ENCODE measurements at regions of chr4 and their contacts with region 1.

Region 1: DNA sequence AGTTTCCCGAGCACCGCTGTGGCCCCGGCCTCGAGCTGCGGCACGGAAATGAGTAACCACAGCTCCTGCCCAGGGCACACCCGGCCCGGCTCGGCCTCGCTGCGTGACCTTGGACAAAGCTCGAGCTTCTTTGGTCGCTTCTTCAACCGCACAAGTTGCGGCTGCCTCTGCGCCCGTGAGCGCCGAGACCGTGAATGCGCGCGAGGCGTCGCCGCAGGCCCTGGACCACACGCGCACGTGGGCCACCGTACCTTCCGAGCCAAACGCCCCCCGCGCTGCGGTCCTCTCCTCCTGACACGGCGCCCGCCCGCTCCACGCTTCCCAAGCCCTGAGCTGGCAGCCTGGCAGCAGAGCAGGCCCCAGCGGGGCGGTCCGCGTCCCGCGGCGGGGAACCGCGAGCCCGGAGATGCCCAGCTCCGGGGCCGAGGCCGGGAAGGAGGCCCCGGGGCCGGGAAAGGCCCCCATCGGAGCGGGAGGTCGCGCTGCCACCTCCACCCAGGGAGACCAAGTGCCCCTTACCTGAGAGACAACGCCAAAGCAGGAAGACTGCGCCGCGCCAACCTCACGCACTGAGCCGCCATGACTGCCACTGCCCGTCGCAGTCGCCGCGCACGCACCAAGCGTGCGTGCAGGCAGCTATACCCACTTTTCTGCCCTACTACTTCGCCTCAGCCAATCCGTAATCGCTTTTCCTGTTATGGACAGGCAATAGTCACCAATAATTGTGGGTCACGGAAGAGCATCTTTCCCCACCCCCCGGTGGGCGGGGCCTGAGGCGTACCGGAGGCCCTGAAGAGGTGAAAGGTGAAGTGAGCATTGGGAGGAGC is at the start of gene GRPEL1:
- DNase-seq: peak; percentile 99
- H3K4me3 ChIP-seq: peak within 1 kb of the TSS; percentile 94
- H3K27ac ChIP-seq: peak within 1 kb of the TSS; percentile 50
- H3K4me1 ChIP-seq: peaks cover 27% of the 10 kb centered on the region
- CTCF ChIP-seq: 0 out of 2 replicates have a peak, but pooled peaks have one; percentile 27
- total RNA-seq, gene GRPEL1: 27.4 and 33.4 TPM in 2 replicates

Region 2: GRCh38 chr4:6716018-6716911 is 351.4 kb before region 1 on chr4 and contains the start of gene BLOC1S4:
- CTCF ChIA-PET with region 1: interaction called, 3 read pairs
- POLR2A ChIA-PET with region 1: interaction called, 4 read pairs
- intact Hi-C with region 1: loop called (anchors 1 kb)
- DNase-seq: peak; percentile 97
- H3K4me3 ChIP-seq: peak within 1 kb of the TSS; percentile 77
- H3K27ac ChIP-seq: peak within 1 kb of the TSS; percentile 38
- H3K4me1 ChIP-seq: peaks cover 21% of the 10 kb centered on the region
- CTCF ChIP-seq: no peak
- total RNA-seq, gene BLOC1S4: 26.5 and 36.1 TPM in 2 replicates

Region 3: DNA sequence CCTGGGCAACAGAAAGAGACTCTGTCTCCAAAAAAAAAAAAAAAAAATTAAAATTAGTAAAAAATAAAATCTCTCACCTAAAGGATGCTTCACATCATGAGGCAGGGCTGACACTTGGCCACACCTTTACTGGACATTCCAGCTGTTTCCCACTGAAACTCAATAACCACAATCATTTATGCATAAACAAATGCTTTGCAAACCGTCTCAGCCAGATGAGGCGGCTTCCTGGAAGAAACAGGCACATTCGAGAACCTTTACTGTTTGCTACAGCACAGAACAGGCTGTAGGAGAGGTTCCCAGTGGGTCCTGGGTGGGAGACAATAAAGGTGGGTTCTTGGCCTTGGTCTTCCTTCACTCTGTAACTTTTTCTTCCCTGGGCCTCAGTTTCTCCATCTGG is 168.9 kb before region 1 on chr4:
- CTCF ChIA-PET with region 1: no interaction called
- POLR2A ChIA-PET with region 1: no interaction called
- intact Hi-C with region 1: no loop called
- DNase-seq: no peak
- H3K4me3 ChIP-seq: no peak overlapping the region
- H3K27ac ChIP-seq: no peak overlapping the region
- H3K4me1 ChIP-seq: peaks cover 3% of the 10 kb centered on the region
- CTCF ChIP-seq: no peak

Region 4: GRCh38 chr4:6909073-6909965 is 158.3 kb before region 1 on chr4 and contains the start of gene TBC1D14:
- CTCF ChIA-PET with region 1: interaction called, 5 read pairs
- POLR2A ChIA-PET with region 1: interaction called, 8 read pairs
- intact Hi-C with region 1: loop called (anchors 1 kb)
- DNase-seq: peak; percentile 89
- H3K4me3 ChIP-seq: peak within 1 kb of the TSS; percentile 73
- H3K27ac ChIP-seq: peak within 1 kb of the TSS; percentile 77
- H3K4me1 ChIP-seq: peaks cover 39% of the 10 kb centered on the region
- CTCF ChIP-seq: peak; percentile 37; the same call in 1 of the 2 replicates
- total RNA-seq, gene TBC1D14: 35.6 and 38.4 TPM in 2 replicates

Region 5: GRCh38 chr4:6986781-6987587 is 80.7 kb before region 1 on chr4:
- CTCF ChIA-PET with region 1: interaction called, 3 read pairs
- POLR2A ChIA-PET with region 1: interaction called, 5 read pairs
- intact Hi-C with region 1: loop called (anchors 1 kb)
- DNase-seq: peak; percentile 96
- H3K4me3 ChIP-seq: peak overlapping the region; percentile 78
- H3K27ac ChIP-seq: peak overlapping the region; percentile 62
- H3K4me1 ChIP-seq: peaks cover 38% of the 10 kb centered on the region
- CTCF ChIP-seq: no peak; the same call in 1 of the 2 replicates

Region 6: GRCh38 chr4:7042697-7043464 is 24.8 kb before region 1 on chr4 and contains the start of gene TADA2B:
- CTCF ChIA-PET with region 1: interaction called, 3 read pairs
- POLR2A ChIA-PET with region 1: interaction called, 9 read pairs
- intact Hi-C with region 1: loop called (anchors 1 kb)
- DNase-seq: peak; percentile 93
- H3K4me3 ChIP-seq: peak within 1 kb of the TSS; percentile 99
- H3K27ac ChIP-seq: peak within 1 kb of the TSS; percentile 55
- H3K4me1 ChIP-seq: peaks cover 37% of the 10 kb centered on the region
- CTCF ChIP-seq: peak; percentile 26; the same call in 1 of the 2 replicates
- total RNA-seq, gene TADA2B: 9.9 and 12.8 TPM in 2 replicates

Measured in OCI-LY7 (cell line).